IMR-90 (cell line): ENCODE measurements at regions of chr17 and their contacts with region 1.

Region 1: DNA sequence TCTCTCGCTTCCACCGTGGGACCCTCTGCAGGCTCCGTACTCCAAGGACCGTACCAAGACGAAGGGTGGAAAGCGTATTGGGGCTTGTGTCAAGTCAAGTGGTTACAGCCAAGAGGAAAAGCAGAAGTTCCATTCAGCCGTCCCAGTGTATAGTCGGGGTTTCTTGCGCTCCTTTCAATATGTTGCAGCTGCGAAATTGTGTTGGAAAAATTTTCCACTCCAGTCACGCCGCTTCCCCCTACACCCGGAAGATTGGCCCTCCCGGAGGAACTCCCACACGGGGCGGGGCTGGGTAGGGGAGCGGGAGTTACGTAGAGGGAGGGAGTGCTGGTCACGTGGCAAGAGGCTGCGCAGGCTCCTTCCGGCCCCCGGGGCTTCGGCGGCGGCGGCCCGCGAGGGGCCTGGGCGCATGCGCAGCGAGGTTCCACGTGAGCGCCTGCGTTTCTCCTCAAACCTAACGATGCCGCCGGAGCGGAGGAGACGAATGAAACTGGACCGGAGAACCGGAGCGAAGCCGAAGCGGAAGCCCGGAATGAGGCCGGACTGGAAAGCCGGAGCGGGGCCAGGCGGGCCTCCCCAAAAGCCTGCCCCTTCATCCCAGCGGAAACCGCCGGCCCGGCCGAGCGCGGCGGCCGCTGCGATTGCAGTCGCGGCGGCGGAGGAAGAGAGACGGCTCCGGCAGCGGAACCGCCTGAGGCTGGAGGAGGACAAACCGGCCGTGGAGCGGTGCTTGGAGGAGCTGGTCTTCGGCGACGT is at the start of gene UTP18:
- DNase-seq: peak; percentile 97
- ATAC-seq: peak; percentile 91
- H3K4me3 ChIP-seq: peak within 1 kb of the TSS; percentile 88
- H3K27ac ChIP-seq: peak within 1 kb of the TSS; percentile 84
- H3K4me1 ChIP-seq: no peaks in the 10 kb centered on the region; the same call in 1 of the 2 replicates
- H3K27me3 ChIP-seq: no peaks in the 10 kb centered on the region
- CTCF ChIP-seq: no peak
- POLR2A ChIP-seq: peak; percentile 75
- RAD21 ChIP-seq: no peak
- total RNA-seq, gene UTP18: 22.4 and 43.9 TPM in 2 replicates

Region 2: GRCh38 chr17:51166197-51166986 is 93.9 kb before region 1 on chr17 and contains the start of gene NME2:
- CTCF ChIA-PET with region 1: no interaction called
- POLR2A ChIA-PET with region 1: no interaction called
- dilution Hi-C with region 1: no loop called
- in situ Hi-C with region 1: no loop called
- intact Hi-C with region 1: loop called (anchors 2 kb)
- DNase-seq: peak; percentile 77
- ATAC-seq: peak; percentile 95
- H3K4me3 ChIP-seq: peak within 1 kb of the TSS; percentile 87
- H3K27ac ChIP-seq: peak within 1 kb of the TSS; percentile 91
- H3K4me1 ChIP-seq: peaks cover 8% of the 10 kb centered on the region; the same call in 1 of the 2 replicates
- H3K27me3 ChIP-seq: no peaks in the 10 kb centered on the region
- CTCF ChIP-seq: no peak; the same call in 1 of the 2 replicates
- POLR2A ChIP-seq: peak; percentile 72
- RAD21 ChIP-seq: no peak
- total RNA-seq, gene NME2: 824 and 863 TPM in 2 replicates

Region 3: DNA sequence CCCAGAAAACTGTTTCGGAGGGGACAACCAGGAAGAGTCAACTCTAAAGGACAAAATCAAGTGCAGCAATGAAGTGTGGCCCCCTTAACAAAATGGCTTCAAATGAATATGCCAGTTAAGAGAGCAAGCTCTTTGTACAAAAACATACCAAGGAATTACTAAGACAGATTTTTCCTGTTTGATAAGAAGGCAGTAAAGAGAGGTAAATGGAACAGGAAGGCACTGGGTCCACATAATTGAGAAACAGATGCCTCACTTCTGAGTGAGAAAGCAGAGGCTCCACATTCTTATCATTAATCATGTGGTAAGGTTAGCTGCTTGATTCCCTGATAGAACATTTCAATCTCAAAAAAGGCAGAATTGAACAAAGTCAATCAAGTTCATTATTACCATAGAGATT is 45.4 kb before region 1 on chr17:
- CTCF ChIA-PET with region 1: no interaction called
- POLR2A ChIA-PET with region 1: no interaction called
- dilution Hi-C with region 1: no loop called
- in situ Hi-C with region 1: no loop called
- intact Hi-C with region 1: loop called (anchors 5 kb)
- DNase-seq: no peak
- ATAC-seq: no peak
- H3K4me3 ChIP-seq: no peak overlapping the region
- H3K27ac ChIP-seq: no peak overlapping the region
- H3K4me1 ChIP-seq: no peaks in the 10 kb centered on the region
- H3K27me3 ChIP-seq: no peaks in the 10 kb centered on the region
- CTCF ChIP-seq: no peak
- POLR2A ChIP-seq: no peak
- RAD21 ChIP-seq: no peak

Region 4: DNA sequence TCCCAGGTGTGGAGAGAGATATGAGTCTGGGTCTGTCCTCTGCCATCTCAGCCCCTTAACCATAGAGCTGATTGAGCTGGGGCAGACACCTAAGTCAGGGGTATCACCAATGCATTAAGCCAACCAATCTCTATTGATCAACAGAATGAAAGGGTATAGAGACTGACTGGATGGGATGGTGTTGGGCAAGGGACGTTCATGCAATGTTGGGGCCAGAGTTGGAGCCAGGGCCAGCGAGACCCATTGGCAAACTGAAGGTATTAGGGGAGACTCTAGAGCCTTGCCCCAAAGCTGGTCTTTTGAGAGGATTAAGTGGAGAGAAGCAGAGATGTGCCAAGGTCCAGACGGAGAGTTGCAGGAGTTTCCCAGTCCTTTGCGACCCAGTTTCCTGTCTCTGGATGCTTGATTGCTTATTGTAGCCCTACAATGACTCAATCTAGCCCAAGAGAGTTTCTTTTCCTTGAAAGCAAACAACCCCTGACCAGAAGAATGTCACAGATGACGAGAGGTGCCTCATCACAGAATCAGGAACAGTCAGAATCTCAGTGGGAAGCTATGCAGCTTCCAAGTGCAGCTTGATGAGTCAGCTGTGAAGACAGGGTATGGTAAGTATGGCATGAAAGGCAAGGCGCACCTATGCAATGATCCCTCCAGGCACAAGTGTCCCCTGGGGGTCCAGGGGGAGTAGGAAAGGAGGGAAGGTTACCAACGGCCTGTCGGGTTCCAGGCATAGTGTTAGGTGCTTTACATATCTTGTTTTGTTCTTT is 137.2 kb after region 1 on chr17:
- CTCF ChIA-PET with region 1: no interaction called
- POLR2A ChIA-PET with region 1: no interaction called
- dilution Hi-C with region 1: no loop called
- in situ Hi-C with region 1: no loop called
- intact Hi-C with region 1: no loop called
- DNase-seq: peak; percentile 45
- ATAC-seq: no peak
- H3K4me3 ChIP-seq: no peak overlapping the region
- H3K27ac ChIP-seq: no peak overlapping the region
- H3K4me1 ChIP-seq: no peaks in the 10 kb centered on the region
- H3K27me3 ChIP-seq: no peaks in the 10 kb centered on the region
- CTCF ChIP-seq: no peak
- POLR2A ChIP-seq: no peak
- RAD21 ChIP-seq: no peak